ENCODE measurements at regions of chr12 and their contacts with region 1.

Region 1: DNA sequence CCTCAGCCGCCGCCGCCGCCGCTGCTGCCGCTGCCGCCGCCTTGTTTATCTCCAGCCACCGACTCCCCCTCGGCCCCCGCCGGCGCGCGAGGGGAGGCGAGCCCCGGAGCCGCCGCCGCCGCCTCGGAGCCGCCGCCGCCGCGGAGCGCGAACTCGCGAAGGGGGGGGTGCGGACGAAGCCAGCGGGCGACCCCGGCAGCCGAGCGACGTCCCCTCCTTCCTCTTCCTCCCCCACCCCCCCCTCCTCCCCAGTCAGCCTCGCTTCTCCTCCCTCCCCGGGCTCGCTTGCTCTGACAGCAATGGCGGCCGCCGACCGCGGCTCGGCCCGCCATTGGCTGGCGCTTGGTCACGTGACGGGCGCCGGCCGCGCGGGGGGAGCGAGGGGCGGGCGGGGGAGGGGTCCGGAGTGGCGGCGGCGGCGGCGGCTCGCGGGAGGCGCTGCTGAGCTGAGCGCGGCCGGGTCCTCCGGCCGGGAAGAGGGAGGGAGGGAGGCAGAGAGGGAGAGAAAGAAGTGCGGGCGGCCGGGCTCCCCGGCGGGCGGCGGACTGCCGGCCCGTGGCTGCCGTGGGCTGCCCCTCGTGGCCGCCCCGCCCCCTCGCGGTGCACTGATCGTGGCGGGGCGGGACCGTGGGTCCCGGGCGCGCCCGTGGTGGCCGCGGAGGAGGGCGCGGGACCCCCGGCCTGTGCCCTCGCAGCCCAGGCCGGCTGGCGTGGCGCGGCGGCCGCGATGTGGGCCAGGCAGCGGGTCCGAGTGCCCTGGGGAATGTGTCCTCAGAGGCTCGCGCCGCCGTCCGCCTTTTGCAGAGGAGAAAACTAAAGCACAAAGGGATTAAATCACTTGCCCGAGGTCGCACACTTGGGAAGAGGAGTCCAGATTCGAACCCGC is at the start of gene MED13L:
- DNase-seq: peak; percentile 67 to 93 (median 82)
- H3K4me3 ChIP-seq: peak within 1 kb of the TSS; percentile 46 to 92 (median 80)
- H3K27ac ChIP-seq: peak within 1 kb of the TSS; percentile 68 to 98 (median 93)
- H3K27me3 ChIP-seq: no peaks in the 10 kb centered on the region
- CTCF ChIP-seq: peak in 51 of 56 donors; percentile 17 to 87 (median 56)
- total RNA-seq, gene MED13L: 102 to 174 (median 140) TPM

Region 2: DNA sequence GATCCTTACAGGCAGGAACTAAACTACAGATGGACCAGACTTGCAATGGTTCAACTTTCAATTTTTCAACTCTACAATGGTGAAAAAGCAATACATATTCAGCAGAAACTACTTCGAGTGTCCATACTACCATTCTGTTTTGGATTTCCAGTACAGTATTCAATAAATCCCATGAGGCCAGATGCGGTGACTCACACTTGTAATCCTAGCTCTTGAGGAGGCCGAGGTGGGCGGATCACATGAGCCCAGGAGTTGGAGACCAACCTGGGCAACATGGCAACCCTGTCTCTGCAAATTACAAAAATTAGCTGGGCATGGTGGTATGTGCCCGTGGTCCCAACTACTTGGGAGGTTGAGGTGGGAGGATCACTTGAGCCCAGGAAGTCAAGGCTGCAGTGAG is 336.3 kb before region 1 on chr12:
- intact Hi-C with region 1: no loop called
- DNase-seq: no peak
- H3K4me3 ChIP-seq: no peak overlapping the region
- H3K27ac ChIP-seq: no peak overlapping the region
- H3K27me3 ChIP-seq: no peaks in the 10 kb centered on the region
- CTCF ChIP-seq: no peak

Region 3: DNA sequence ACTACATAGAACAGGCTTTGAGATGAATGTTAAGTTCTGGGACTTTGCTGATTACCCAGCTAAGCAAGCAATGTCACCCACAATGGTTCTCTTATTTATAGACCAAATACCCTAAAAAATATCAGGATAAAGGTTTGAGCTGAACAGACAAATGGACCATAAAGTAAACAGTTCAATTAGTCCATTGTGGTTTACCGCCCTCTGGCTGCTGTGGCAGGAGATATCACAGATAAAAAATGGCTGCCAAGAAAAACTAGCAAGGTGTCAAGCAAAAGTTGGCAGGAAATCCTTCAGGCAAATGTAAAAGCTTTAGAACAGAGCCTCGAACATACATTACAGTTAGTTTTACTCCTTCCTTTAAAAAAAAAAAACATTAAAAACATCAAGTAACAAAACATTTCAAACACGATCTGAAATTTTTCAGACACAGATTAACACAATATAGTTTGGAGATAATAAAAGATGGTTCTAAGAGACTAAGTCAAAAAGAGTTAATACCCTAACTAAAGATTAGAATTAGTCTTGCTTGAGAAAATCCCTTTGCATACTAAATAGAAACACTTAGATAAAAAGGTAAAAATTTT is 41.4 kb before region 1 on chr12:
- intact Hi-C with region 1: loop called (anchors 5 kb)
- DNase-seq: peak in 4 of 10 donors; percentile 10 to 61 (median 52)
- H3K4me3 ChIP-seq: no peak overlapping the region
- H3K27ac ChIP-seq: peak overlapping the region in 15 of 59 donors; percentile 2 to 66 (median 29)
- H3K27me3 ChIP-seq: no peaks in the 10 kb centered on the region
- CTCF ChIP-seq: peak; percentile 59 to 96 (median 82)

Region 4: GRCh38 chr12:116533343-116534251 is 256.0 kb after region 1 on chr12:
- intact Hi-C with region 1: loop called (anchors 5 to 10 kb)
- DNase-seq: peak; percentile 62 to 94 (median 81)
- H3K4me3 ChIP-seq: peak overlapping the region; percentile 44 to 83 (median 66)
- H3K27ac ChIP-seq: peak overlapping the region in 55 of 59 donors; percentile 10 to 93 (median 78)
- H3K27me3 ChIP-seq: no peaks in the 10 kb centered on the region
- CTCF ChIP-seq: no peak

Region 5: GRCh38 chr12:116591855-116592637 is 314.4 kb after region 1 on chr12:
- intact Hi-C with region 1: loop called (anchors 5 kb)
- DNase-seq: peak in 5 of 10 donors; percentile 15 to 60 (median 50)
- H3K4me3 ChIP-seq: no peak overlapping the region
- H3K27ac ChIP-seq: peak overlapping the region in 4 of 59 donors; percentile 17 to 61 (median 26)
- H3K27me3 ChIP-seq: peaks cover 0 to 3% (median 0%) of the 10 kb centered on the region in 45 donors
- CTCF ChIP-seq: no peak

Region 6: GRCh38 chr12:116659771-116660481 is 382.3 kb after region 1 on chr12:
- intact Hi-C with region 1: loop called in 1 of 2 experiments (anchors 5 kb)
- DNase-seq: peak in 1 of 10 donors; percentile 22
- H3K4me3 ChIP-seq: no peak overlapping the region
- H3K27ac ChIP-seq: peak overlapping the region in 1 of 59 donors; percentile 75
- H3K27me3 ChIP-seq: no peaks in the 10 kb centered on the region
- CTCF ChIP-seq: no peak

Region 7: GRCh38 chr12:116737774-116738700 is 460.4 kb after region 1 on chr12 and contains the starts of genes RNFT2 and SPRING1:
- intact Hi-C with region 1: loop called in 1 of 2 experiments (anchors 5 kb)
- DNase-seq: peak; percentile 99 to 100 (median 100)
- H3K4me3 ChIP-seq: peak within 1 kb of the TSS; percentile 54 to 99 (median 88)
- H3K27ac ChIP-seq: peak within 1 kb of the TSS in 43 of 59 donors; percentile 16 to 87 (median 71)
- H3K27me3 ChIP-seq: no peaks in the 10 kb centered on the region
- CTCF ChIP-seq: peak in 29 of 56 donors; percentile 5 to 63 (median 23)
- total RNA-seq, gene RNFT2: 30.4 to 86.7 (median 60.1) TPM
- total RNA-seq, gene SPRING1: 30.7 to 74.8 (median 44.1) TPM

Measured in dorsolateral prefrontal cortex (tissue), 120 donors.